ENCODE measurements at regions of chr20 and their contacts with region 1.

Region 1: GRCh38 chr20:53623454-53624211 is 30.0 kb upstream of the ZNF217 start:
- DNase-seq: peak; percentile 80
- H3K4me3 Mint-ChIP-seq: peak overlapping the region; percentile 57
- H3K27ac Mint-ChIP-seq: peak overlapping the region; percentile 98
- H3K4me1 Mint-ChIP-seq: peaks cover 18% of the 10 kb centered on the region
- H3K27me3 Mint-ChIP-seq: no peaks in the 10 kb centered on the region
- CTCF ChIP-seq: no peak

Region 2: GRCh38 chr20:53547664-53548239 is 75.9 kb before region 1 on chr20:
- CTCF ChIA-PET with region 1: no interaction called
- POLR2A ChIA-PET with region 1: no interaction called
- intact Hi-C with region 1: no loop called
- DNase-seq: peak; percentile 65
- H3K4me3 Mint-ChIP-seq: no peak overlapping the region
- H3K27ac Mint-ChIP-seq: no peak overlapping the region
- H3K4me1 Mint-ChIP-seq: no peaks in the 10 kb centered on the region
- H3K27me3 Mint-ChIP-seq: no peaks in the 10 kb centered on the region
- CTCF ChIP-seq: peak; percentile 91

Region 3: DNA sequence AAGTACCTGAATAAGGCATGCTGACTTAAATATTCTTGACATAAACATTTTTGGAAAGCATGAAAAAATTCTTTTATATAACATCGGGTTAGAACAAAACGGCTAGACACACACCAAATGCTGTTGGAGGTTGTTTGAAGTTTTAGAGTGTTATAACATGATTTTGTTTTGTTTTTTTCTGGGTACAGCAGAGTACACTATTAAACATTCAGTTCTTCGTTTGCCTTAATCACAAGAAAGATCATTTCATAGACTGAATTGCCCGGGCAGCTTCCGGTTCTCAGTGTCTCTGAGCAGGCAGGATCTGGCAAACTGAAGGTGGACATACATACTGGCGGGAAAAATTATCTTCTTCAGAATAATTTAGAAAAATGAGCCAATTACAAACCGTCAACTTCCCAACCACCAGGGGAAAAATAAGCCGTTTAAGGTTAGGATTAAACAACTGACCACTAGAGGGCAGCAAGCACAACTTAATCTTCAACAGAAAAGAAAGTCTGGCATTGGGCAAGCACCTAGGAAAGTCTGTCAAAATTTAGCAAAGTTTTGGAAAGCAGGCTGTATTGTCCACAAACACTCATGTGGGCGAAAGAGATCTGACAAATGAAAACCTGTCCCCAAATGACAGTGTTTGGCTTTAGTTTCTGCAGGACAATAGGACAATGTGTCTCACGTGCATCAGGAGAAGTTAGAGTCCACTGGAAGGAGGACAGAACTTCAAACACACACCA is 45.0 kb before region 1 on chr20:
- CTCF ChIA-PET with region 1: interaction called, 8 read pairs
- POLR2A ChIA-PET with region 1: interaction called, 77 read pairs
- intact Hi-C with region 1: loop called (anchors 5 kb)
- DNase-seq: peak; percentile 91
- H3K4me3 Mint-ChIP-seq: peak overlapping the region; percentile 54
- H3K27ac Mint-ChIP-seq: peak overlapping the region; percentile 90
- H3K4me1 Mint-ChIP-seq: peaks cover 30% of the 10 kb centered on the region
- H3K27me3 Mint-ChIP-seq: no peaks in the 10 kb centered on the region
- CTCF ChIP-seq: peak; percentile 92

Region 4: GRCh38 chr20:53611449-53611894 is 12.2 kb before region 1 on chr20:
- CTCF ChIA-PET with region 1: interaction called, 9 read pairs
- POLR2A ChIA-PET with region 1: interaction called, 96 read pairs
- intact Hi-C with region 1: no loop called
- DNase-seq: peak; percentile 82
- H3K4me3 Mint-ChIP-seq: peak overlapping the region; percentile 47
- H3K27ac Mint-ChIP-seq: peak overlapping the region; percentile 82
- H3K4me1 Mint-ChIP-seq: peaks cover 12% of the 10 kb centered on the region
- H3K27me3 Mint-ChIP-seq: no peaks in the 10 kb centered on the region
- CTCF ChIP-seq: no peak

Region 5: DNA sequence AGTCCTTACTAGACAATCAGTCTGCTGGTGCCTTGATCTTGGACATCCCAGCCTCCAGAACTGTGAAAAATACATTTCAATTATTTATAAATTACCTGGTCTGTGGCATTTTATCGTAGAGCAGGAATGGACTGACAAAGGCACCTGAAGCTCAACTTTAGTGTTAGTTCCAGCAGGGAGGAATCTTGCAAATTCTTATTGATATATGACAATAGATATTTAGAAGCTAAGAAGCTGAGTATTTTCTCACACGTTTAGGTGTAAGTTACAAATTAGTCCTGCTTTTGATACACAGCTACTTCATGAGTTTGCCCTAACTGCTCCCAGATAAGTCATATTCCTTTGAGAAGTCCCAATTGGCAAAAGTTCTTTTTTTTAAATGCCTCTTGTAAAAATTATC is 108.0 kb after region 1 on chr20:
- CTCF ChIA-PET with region 1: interaction called, 4 read pairs
- POLR2A ChIA-PET with region 1: interaction called, 30 read pairs
- intact Hi-C with region 1: no loop called
- DNase-seq: no peak
- H3K4me3 Mint-ChIP-seq: no peak overlapping the region
- H3K27ac Mint-ChIP-seq: no peak overlapping the region
- H3K4me1 Mint-ChIP-seq: peaks cover 24% of the 10 kb centered on the region
- H3K27me3 Mint-ChIP-seq: no peaks in the 10 kb centered on the region
- CTCF ChIP-seq: no peak

Region 6: DNA sequence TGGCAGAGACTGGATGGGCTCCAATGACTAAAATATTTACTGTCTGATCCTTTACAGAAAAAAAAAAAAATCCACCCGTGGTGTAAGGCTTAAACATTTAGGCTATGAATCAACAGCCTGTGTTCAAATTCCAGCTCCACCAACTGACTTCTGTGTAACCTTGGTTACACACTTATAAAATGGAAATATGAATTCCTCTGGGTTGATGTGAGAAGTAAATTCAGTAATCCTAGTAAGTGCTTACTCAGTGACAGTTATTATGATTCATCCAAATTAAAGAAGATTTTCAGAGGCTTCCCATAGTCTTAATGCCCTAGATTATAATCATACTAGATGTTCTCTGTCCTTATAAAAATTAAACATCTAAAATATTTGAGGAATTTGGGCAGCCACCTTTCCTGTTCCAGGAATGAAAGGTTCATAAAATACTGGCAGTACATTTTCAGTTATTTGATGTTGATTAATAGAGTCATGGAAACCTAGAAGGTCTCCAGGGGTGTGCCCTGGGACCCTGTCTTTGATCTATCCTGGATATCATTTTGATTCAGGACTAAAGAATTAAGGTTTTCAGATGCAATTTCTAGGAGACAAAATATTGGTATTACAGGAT is 150.3 kb after region 1 on chr20:
- CTCF ChIA-PET with region 1: interaction called, 3 read pairs
- POLR2A ChIA-PET with region 1: interaction called, 26 read pairs
- intact Hi-C with region 1: loop called (anchors 5 kb)
- DNase-seq: peak; percentile 79
- H3K4me3 Mint-ChIP-seq: no peak overlapping the region
- H3K27ac Mint-ChIP-seq: peak overlapping the region; percentile 92
- H3K4me1 Mint-ChIP-seq: peaks cover 21% of the 10 kb centered on the region
- H3K27me3 Mint-ChIP-seq: no peaks in the 10 kb centered on the region
- CTCF ChIP-seq: no peak

Region 7: DNA sequence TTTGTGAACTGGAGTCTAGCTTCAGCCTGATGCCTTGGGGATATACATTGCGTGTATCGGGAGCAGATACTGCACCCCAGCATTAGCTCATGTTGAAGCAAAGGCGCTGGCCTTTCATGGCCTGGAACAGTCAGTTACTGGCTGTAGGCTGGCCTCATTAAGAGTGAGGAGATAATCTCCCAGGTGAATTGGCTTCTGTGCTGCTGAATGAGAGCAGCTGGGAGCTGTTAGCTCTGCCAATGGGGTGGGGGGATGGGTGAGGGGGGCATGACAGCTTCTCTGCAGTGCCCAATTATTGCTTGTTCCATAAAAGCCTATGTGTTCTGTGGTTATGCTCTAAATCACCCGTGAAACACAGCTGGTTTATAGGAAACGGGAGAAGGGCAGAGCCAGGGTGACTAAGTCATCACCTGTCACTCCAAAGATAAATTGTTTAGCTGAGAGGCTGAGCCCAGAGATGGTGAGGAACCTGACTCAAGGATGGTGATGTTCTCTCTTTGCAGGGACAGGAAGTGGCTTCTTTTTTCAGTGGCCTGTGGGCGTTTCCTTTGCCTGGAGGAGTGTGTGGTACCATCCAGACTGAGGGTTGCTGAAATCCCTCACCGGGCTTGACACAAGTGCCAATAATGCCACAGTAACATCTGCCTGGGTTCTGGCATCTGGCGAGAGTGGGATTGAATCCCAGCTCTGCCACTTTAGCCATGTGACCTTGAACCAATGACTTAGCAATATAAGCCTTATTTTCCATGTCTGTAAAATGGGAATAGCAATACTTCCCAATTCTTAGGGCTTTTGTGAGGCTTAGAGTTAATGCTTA is 275.9 kb after region 1 on chr20:
- CTCF ChIA-PET with region 1: interaction called, 8 read pairs
- POLR2A ChIA-PET with region 1: interaction called, 40 read pairs
- intact Hi-C with region 1: no loop called
- DNase-seq: peak; percentile 89
- H3K4me3 Mint-ChIP-seq: peak overlapping the region; percentile 39
- H3K27ac Mint-ChIP-seq: peak overlapping the region; percentile 75
- H3K4me1 Mint-ChIP-seq: peaks cover 27% of the 10 kb centered on the region
- H3K27me3 Mint-ChIP-seq: no peaks in the 10 kb centered on the region
- CTCF ChIP-seq: no peak